Activated naive CD4-positive, alpha-beta T cell treated with anti-CD3 and anti-CD28 coated beads for 36 hours (primary cell): ENCODE measurements at regions of chrX and their contacts with region 1.

Region 1: GRCh38 chrX:9995855-9996339 is 28.7 kb downstream of the CLDN34 start:
- DNase-seq: peak; percentile 78
- H3K4me3 Mint-ChIP-seq: no peak overlapping the region
- H3K27ac Mint-ChIP-seq: no peak overlapping the region
- H3K4me1 Mint-ChIP-seq: peaks cover 9% of the 10 kb centered on the region
- H3K27me3 Mint-ChIP-seq: no peaks in the 10 kb centered on the region

Region 2: DNA sequence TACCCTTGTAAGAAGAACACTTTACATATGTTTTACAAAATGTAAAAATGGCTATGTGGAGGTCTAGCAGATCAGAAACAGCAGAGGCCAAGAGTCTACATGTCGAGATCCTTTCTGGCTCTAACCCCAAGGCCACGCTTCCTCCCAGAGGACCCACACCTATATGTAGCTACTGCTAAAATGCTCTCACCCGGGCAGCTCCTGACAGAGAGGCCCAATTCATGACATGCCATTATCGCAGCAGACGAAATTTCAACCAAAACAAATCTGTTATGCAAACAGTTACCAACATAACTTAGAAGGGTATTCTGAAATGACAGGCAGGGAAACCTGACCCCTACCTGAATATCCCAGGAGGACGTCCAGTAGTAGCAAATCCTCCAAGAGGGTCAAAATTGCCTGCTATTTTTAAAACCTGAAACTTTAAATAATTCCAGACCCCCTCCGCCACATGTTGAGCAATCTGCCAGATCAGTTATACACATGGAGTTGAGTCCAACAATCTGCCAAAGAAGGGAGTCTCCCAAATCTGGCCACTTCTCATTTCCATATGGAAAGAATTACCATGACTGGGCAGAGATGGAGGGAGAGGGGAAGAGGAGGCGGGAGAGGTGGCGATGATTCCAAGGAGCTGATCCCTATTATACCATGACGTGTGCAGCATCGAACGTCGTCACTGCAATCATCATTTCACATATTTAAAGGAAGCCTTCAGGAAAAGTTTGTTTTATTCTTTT is 723.9 kb before region 1 on chrX:
- CTCF ChIA-PET with region 1: no interaction called
- intact Hi-C with region 1: no loop called
- DNase-seq: no peak
- H3K4me3 Mint-ChIP-seq: no peak overlapping the region
- H3K27ac Mint-ChIP-seq: no peak overlapping the region
- H3K4me1 Mint-ChIP-seq: no peaks in the 10 kb centered on the region
- H3K27me3 Mint-ChIP-seq: no peaks in the 10 kb centered on the region

Region 3: GRCh38 chrX:9873952-9874351 is 121.9 kb before region 1 on chrX:
- CTCF ChIA-PET with region 1: interaction called, 3 read pairs
- intact Hi-C with region 1: loop called (anchors 2 kb)
- DNase-seq: peak; percentile 62
- H3K4me3 Mint-ChIP-seq: no peak overlapping the region
- H3K27ac Mint-ChIP-seq: no peak overlapping the region
- H3K4me1 Mint-ChIP-seq: peaks cover 13% of the 10 kb centered on the region
- H3K27me3 Mint-ChIP-seq: peaks cover 3% of the 10 kb centered on the region

Region 4: GRCh38 chrX:10014462-10015356 is 18.8 kb after region 1 on chrX:
- CTCF ChIA-PET with region 1: interaction called, 4 read pairs
- intact Hi-C with region 1: loop called (anchors 1 kb)
- DNase-seq: peak; percentile 71
- H3K4me3 Mint-ChIP-seq: peak overlapping the region; percentile 67
- H3K27ac Mint-ChIP-seq: peak overlapping the region; percentile 30
- H3K4me1 Mint-ChIP-seq: peaks cover 35% of the 10 kb centered on the region
- H3K27me3 Mint-ChIP-seq: peaks cover 4% of the 10 kb centered on the region

Region 5: GRCh38 chrX:10083809-10084208 is 87.9 kb after region 1 on chrX:
- CTCF ChIA-PET with region 1: interaction called, 13 read pairs
- intact Hi-C with region 1: no loop called
- DNase-seq: no peak
- H3K4me3 Mint-ChIP-seq: no peak overlapping the region
- H3K27ac Mint-ChIP-seq: no peak overlapping the region
- H3K4me1 Mint-ChIP-seq: peaks cover 34% of the 10 kb centered on the region
- H3K27me3 Mint-ChIP-seq: no peaks in the 10 kb centered on the region

Region 6: GRCh38 chrX:10111364-10112148 is 115.7 kb after region 1 on chrX:
- CTCF ChIA-PET with region 1: interaction called, 241 read pairs
- intact Hi-C with region 1: loop called (anchors 1 kb)
- DNase-seq: peak; percentile 59
- H3K4me3 Mint-ChIP-seq: peak overlapping the region; percentile 64
- H3K27ac Mint-ChIP-seq: peak overlapping the region; percentile 91
- H3K4me1 Mint-ChIP-seq: peaks cover 56% of the 10 kb centered on the region
- H3K27me3 Mint-ChIP-seq: no peaks in the 10 kb centered on the region